ENCODE measurements at regions of chr21 and their contacts with region 1.

Region 1: GRCh38 chr21:37658817-37659458 is 257.3 kb downstream of the KCNJ6 start:
- DNase-seq: peak; percentile 60
- H3K27ac ChIP-seq: peak overlapping the region; percentile 63
- CTCF ChIP-seq: peak; percentile 27; the same call in 1 of the 2 replicates

Region 2: GRCh38 chr21:37615962-37616361 is 43.0 kb before region 1 on chr21:
- CTCF ChIA-PET with region 1: no interaction called
- POLR2A ChIA-PET with region 1: no interaction called
- DNase-seq: no peak
- H3K27ac ChIP-seq: no peak overlapping the region
- CTCF ChIP-seq: no peak

Region 3: DNA sequence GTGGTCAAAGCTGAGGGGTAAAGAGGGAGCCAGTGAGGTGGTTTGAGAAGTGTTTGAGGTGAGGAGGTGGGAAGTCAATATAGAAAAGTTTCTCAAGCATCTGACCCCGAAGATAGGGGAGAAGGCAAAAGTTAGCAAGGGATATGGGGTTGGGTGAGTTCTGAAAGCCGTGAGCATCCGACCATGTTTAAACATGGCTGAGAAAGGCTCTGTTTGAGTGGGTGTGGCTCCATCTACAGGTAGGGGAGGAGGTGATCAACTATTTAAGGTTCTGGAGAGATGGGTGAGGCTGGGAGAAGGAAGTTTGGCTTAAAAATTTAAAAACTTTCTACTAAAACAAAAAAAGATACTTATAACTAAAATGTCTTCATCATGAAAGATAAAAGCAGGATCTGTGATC is 16.4 kb before region 1 on chr21:
- CTCF ChIA-PET with region 1: no interaction called
- POLR2A ChIA-PET with region 1: no interaction called
- DNase-seq: no peak
- H3K27ac ChIP-seq: no peak overlapping the region
- CTCF ChIP-seq: no peak

Region 4: DNA sequence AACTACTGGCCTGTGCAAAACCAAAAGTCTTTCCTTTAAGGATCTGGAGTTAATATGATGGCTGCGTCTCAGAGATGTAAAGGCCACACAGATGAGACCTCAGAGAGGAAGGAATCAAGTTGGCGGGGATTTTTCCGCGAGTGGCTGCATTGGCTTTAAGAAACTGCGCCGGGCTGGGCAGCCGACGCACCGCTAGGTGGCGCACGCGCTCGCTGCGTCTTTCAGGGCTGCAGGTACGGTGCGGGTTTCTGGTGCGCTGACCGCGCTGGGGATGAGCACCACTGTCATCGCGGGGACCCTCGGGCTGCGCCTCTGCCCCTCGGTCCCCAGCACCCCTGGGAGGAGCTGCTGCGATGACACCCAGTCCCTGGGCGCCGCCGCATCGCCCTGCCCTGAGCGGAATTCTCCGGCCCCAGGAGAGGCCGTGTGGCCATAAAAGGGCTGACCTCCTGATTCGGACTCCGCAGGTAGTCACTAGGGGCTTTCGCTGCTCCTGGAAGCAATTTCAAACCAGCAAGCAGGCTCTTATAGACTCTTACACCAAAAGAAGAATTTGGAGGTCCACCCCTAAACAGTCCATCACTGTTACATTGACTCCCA is 16.4 kb after region 1 on chr21:
- CTCF ChIA-PET with region 1: interaction called, 15 read pairs
- POLR2A ChIA-PET with region 1: no interaction called
- DNase-seq: peak; percentile 55
- H3K27ac ChIP-seq: no peak overlapping the region
- CTCF ChIP-seq: peak; percentile 96

Region 5: GRCh38 chr21:37815893-37816292 is 157.0 kb after region 1 on chr21:
- CTCF ChIA-PET with region 1: no interaction called
- POLR2A ChIA-PET with region 1: no interaction called
- DNase-seq: no peak
- H3K27ac ChIP-seq: no peak overlapping the region
- CTCF ChIP-seq: no peak

Measured in RWPE1 (cell line).